ENCODE measurements at regions of chr9 and their contacts with region 1.

Region 1: GRCh38 chr9:29241320-29241719 is 1668.0 kb upstream of the C9orf72 start:
- DNase-seq: no peak
- ATAC-seq: no peak
- H3K4me3 ChIP-seq: no peak overlapping the region
- H3K4me3 Mint-ChIP-seq: no peak overlapping the region
- H3K27ac ChIP-seq: no peak overlapping the region
- H3K27ac Mint-ChIP-seq: no peak overlapping the region
- H3K4me1 ChIP-seq: no peaks in the 10 kb centered on the region
- H3K4me1 Mint-ChIP-seq: no peaks in the 10 kb centered on the region
- H3K27me3 ChIP-seq: no peaks in the 10 kb centered on the region
- H3K27me3 Mint-ChIP-seq: no peaks in the 10 kb centered on the region
- CTCF ChIP-seq: no peak

Region 2: GRCh38 chr9:29297592-29297991 is 56.3 kb after region 1 on chr9:
- CTCF ChIA-PET with region 1: no interaction called
- POLR2A ChIA-PET with region 1: no interaction called
- intact Hi-C with region 1: no loop called
- DNase-seq: peak in 2 of 9 experiments; percentile 3 to 13
- ATAC-seq: no peak
- H3K4me3 ChIP-seq: no peak overlapping the region
- H3K4me3 Mint-ChIP-seq: no peak overlapping the region
- H3K27ac ChIP-seq: no peak overlapping the region
- H3K27ac Mint-ChIP-seq: no peak overlapping the region
- H3K4me1 ChIP-seq: no peaks in the 10 kb centered on the region
- H3K4me1 Mint-ChIP-seq: no peaks in the 10 kb centered on the region
- H3K27me3 ChIP-seq: no peaks in the 10 kb centered on the region
- H3K27me3 Mint-ChIP-seq: no peaks in the 10 kb centered on the region
- CTCF ChIP-seq: no peak

Region 3: GRCh38 chr9:29775491-29775890 is 534.2 kb after region 1 on chr9:
- CTCF ChIA-PET with region 1: no interaction called
- POLR2A ChIA-PET with region 1: no interaction called
- intact Hi-C with region 1: loop called in 1 of 2 experiments (anchors 5 kb)
- DNase-seq: no peak
- ATAC-seq: no peak
- H3K4me3 ChIP-seq: no peak overlapping the region
- H3K4me3 Mint-ChIP-seq: no peak overlapping the region
- H3K27ac ChIP-seq: no peak overlapping the region
- H3K27ac Mint-ChIP-seq: no peak overlapping the region
- H3K4me1 ChIP-seq: no peaks in the 10 kb centered on the region
- H3K4me1 Mint-ChIP-seq: no peaks in the 10 kb centered on the region
- H3K27me3 ChIP-seq: no peaks in the 10 kb centered on the region
- H3K27me3 Mint-ChIP-seq: no peaks in the 10 kb centered on the region
- CTCF ChIP-seq: no peak

Region 4: GRCh38 chr9:30060976-30061375 is 819.7 kb after region 1 on chr9:
- CTCF ChIA-PET with region 1: no interaction called
- POLR2A ChIA-PET with region 1: no interaction called
- intact Hi-C with region 1: no loop called
- DNase-seq: no peak
- ATAC-seq: no peak
- H3K4me3 ChIP-seq: no peak overlapping the region
- H3K4me3 Mint-ChIP-seq: no peak overlapping the region
- H3K27ac ChIP-seq: no peak overlapping the region
- H3K27ac Mint-ChIP-seq: no peak overlapping the region
- H3K4me1 ChIP-seq: no peaks in the 10 kb centered on the region
- H3K4me1 Mint-ChIP-seq: no peaks in the 10 kb centered on the region
- H3K27me3 ChIP-seq: no peaks in the 10 kb centered on the region
- H3K27me3 Mint-ChIP-seq: no peaks in the 10 kb centered on the region
- CTCF ChIP-seq: no peak